ENCODE measurements at regions of chr10 and their contacts with region 1.

Region 1: DNA sequence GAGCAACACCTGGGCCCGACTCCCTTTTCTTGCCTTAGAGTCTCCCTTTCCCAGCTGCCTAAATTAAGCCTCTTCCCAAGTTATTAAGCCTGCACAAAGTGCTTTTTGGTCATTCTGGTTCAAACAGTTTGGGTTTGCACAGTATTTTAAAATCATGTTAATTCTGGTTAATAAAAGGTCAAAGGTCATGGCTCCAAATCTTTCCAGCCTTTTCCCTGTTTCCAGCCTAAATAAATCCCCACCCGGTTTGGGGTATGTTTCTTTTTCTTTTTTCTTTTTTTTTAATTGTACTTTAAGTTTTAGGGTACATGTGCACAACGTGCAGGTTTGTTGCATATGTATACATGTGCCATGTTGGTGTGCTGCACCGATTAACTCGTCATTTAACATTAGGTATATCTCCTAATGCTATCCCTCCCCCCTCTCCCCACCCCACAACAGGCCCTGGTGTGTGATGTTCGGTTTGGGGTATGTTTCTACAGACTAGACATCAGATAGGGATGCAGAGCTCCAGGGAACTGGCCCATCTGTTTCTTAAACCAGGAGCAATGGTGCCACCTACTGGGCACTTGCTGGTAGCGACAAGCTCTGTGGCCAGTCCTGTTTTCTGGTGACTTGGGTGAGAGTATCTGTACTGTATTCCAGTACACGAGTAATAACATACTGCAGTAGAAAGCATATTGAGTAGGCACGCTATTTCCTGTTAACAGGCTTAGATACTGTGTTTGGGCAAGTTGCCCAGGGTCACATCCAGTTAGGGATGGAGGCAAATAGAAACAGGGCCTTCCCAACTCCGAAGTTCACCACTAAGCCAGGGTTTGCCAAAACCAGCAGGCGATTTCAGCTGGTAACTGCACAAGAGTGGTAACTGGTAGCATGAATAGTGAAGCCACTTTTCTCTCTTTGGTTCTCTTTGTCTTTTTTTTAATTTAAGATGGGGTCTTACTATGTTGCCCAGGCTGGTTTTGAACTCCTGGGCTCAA is 60.6 kb upstream of the TRIM8 start:
- DNase-seq: peak; percentile 74
- ATAC-seq: peak; percentile 99
- H3K4me3 ChIP-seq: no peak overlapping the region
- H3K27ac ChIP-seq: no peak overlapping the region
- H3K4me1 ChIP-seq: peaks cover 5% of the 10 kb centered on the region; the same call in 1 of the 2 replicates
- H3K27me3 ChIP-seq: no peaks in the 10 kb centered on the region
- CTCF ChIP-seq: peak; percentile 94

Region 2: DNA sequence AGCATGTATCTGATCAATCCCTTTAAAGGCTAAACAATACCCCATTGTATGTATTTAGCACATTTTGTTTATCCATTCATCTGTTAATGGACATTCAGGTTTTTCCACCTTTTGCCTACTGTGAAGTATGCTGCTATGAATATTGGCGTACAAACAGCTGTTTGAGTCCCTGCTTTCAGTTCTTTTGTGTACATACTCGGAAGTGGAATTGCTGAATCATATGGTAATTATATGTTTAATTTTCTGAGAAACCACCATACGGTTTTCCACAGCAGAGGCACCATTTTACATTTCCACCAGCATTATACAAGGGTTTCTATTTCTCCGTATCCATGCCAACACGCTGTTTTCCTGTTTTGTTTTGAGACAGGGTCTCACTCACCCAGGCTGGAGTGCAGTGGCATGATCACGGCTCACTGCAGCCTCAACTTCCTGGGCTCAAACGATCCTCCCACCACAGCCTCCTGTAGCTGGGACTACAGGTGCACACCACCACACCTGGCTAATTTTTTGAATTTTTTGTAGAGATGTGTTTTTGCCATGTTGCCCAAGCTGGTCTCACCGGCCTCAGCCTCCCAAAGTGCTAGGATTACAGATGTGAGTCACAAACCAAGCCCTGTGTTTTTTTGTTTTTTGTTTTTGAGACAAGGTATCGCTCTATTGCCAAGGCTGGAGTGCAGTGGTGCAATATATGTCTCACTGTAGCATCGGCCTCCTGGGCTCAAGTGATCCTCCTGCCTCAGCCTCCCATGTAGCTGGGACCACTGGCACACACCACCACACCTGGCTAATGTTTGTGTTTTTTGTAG is 866.7 kb before region 1 on chr10:
- CTCF ChIA-PET with region 1: no interaction called
- POLR2A ChIA-PET with region 1: no interaction called
- in situ Hi-C with region 1: no loop called
- intact Hi-C with region 1: no loop called
- DNase-seq: no peak
- ATAC-seq: no peak
- H3K4me3 ChIP-seq: no peak overlapping the region
- H3K27ac ChIP-seq: no peak overlapping the region
- H3K4me1 ChIP-seq: no peaks in the 10 kb centered on the region
- H3K27me3 ChIP-seq: no peaks in the 10 kb centered on the region
- CTCF ChIP-seq: no peak

Region 3: DNA sequence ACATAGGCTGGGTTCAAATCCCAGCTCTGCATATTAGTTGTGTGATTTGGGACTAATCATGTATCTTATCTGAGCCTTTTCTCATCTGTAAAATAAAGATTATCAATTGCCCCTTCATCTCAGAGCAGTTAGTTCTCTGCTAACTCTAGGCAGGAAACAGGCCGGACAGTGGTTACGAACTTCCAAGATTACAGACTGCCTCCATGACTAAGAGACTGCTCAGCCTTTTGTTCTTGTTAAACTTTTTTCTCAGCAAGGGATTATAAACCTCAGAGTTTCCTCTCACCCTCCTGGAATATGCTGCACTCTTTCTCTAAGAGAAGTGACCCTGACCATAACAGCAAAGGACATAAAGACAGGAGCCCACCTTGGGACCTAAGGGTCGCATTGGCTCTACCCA is 240.8 kb before region 1 on chr10:
- CTCF ChIA-PET with region 1: no interaction called
- POLR2A ChIA-PET with region 1: no interaction called
- in situ Hi-C with region 1: no loop called
- intact Hi-C with region 1: no loop called
- DNase-seq: no peak
- ATAC-seq: no peak
- H3K4me3 ChIP-seq: no peak overlapping the region
- H3K27ac ChIP-seq: no peak overlapping the region
- H3K4me1 ChIP-seq: no peaks in the 10 kb centered on the region
- H3K27me3 ChIP-seq: no peaks in the 10 kb centered on the region
- CTCF ChIP-seq: no peak

Region 4: GRCh38 chr10:102394079-102394800 is 189.5 kb before region 1 on chr10:
- CTCF ChIA-PET with region 1: no interaction called
- POLR2A ChIA-PET with region 1: interaction called, 11 read pairs
- in situ Hi-C with region 1: no loop called
- intact Hi-C with region 1: no loop called
- DNase-seq: peak; percentile 79
- ATAC-seq: peak; percentile 92
- H3K4me3 ChIP-seq: peak overlapping the region; percentile 67 to 89
- H3K27ac ChIP-seq: peak overlapping the region; percentile 63
- H3K4me1 ChIP-seq: peaks cover 23% of the 10 kb centered on the region
- H3K27me3 ChIP-seq: no peaks in the 10 kb centered on the region; the same call in 1 of the 2 replicates
- CTCF ChIP-seq: peak; percentile 86

Region 5: DNA sequence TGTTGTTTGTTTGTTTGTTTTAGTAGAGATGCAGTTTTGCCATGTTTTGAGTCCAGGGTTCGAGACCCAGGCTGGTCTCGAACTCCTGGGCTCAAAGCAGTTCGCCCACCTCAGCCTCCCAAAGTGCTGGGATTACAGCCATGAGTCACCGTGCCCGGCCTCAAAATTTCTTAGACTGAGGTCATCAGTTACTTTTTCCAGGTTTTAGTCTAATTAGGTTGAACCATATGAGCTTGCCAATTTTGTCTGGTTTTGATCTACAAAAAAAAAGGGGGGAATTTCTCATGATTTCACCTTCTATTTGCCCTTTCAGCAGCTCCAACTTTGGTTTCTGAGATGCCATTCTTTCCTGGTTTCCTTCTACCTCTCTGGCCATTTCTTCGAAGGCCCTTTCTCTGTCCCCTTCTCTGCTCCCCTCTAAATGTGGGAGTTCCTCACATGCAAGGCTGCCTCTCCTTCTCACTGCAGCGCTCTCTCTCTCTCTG is 156.9 kb before region 1 on chr10:
- CTCF ChIA-PET with region 1: no interaction called
- POLR2A ChIA-PET with region 1: interaction called, 11 read pairs
- in situ Hi-C with region 1: no loop called
- intact Hi-C with region 1: no loop called
- DNase-seq: no peak
- ATAC-seq: no peak
- H3K4me3 ChIP-seq: no peak overlapping the region
- H3K27ac ChIP-seq: no peak overlapping the region
- H3K4me1 ChIP-seq: peaks cover 15% of the 10 kb centered on the region
- H3K27me3 ChIP-seq: no peaks in the 10 kb centered on the region
- CTCF ChIP-seq: no peak

Region 6: DNA sequence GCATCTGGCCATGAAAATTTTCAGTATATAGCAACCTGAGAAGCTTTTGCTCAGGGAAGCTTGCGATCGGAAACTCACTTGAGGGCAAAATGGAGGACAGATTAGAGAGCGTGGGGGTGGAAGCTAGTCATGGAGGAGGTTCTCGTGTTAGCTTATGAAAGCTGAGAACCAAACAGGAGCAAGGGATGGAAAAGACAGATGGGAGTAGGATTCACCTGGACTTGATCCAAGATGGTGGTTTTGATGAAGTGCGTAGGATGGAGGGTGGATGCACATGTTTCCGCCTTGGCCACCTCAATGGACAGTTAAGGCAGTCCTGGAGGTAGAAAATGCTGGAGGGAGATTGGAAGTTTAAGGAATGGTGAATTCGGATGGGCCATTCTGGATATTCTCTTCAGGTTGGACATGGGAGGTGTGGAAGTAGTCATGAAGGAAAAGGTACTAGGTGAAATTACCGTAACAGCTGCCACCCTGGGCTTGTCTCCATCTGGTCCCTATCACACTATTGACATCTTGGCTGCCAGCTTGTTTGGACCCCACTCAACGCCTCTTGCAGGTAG is 126.1 kb before region 1 on chr10:
- CTCF ChIA-PET with region 1: no interaction called
- POLR2A ChIA-PET with region 1: interaction called, 14 read pairs
- in situ Hi-C with region 1: no loop called
- intact Hi-C with region 1: no loop called
- DNase-seq: no peak
- ATAC-seq: no peak
- H3K4me3 ChIP-seq: no peak overlapping the region
- H3K27ac ChIP-seq: no peak overlapping the region
- H3K4me1 ChIP-seq: peaks cover 16% of the 10 kb centered on the region
- H3K27me3 ChIP-seq: no peaks in the 10 kb centered on the region
- CTCF ChIP-seq: no peak

Region 7: DNA sequence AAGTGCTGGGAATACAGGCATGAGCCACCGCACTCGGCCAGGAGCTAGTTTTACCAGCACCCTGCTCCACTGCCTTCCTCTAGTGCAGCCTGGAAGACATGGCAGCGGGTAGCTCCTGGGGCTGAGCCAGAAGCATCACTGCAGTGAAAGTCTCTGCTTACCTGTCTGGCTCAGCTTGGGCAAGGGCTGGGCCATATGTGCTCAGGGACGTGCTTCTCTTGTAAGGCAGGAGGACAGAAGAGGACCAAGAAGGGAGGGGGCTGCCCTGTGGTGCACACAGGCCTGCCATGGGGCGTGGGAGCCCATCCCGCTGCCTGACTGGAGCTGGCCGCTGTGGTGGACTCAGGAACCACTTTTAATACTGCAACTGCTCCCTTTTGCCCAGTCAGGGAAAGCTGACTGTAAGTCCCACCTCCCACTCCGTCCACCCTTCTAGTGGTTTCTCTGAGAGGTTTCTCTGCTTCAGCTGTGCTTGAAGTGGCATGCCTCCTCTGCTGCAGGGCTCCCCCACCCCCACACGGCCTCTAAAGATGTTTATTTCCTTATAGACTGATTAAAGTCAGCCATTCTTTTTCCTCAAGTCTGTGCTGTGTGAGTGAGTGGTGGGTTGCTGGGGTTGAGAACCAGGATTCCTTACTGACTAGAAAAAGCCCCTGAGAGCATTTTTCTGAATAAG is 107.1 kb before region 1 on chr10:
- CTCF ChIA-PET with region 1: interaction called, 11 read pairs
- POLR2A ChIA-PET with region 1: no interaction called
- in situ Hi-C with region 1: no loop called
- intact Hi-C with region 1: no loop called
- DNase-seq: no peak
- ATAC-seq: 0 out of 2 replicates have a peak, but pooled peaks have one; percentile 3
- H3K4me3 ChIP-seq: no peak overlapping the region
- H3K27ac ChIP-seq: no peak overlapping the region
- H3K4me1 ChIP-seq: no peaks in the 10 kb centered on the region
- H3K27me3 ChIP-seq: no peaks in the 10 kb centered on the region
- CTCF ChIP-seq: no peak

Region 8: GRCh38 chr10:102503281-102504220 is 80.2 kb before region 1 on chr10 and contains the start of gene SUFU:
- CTCF ChIA-PET with region 1: interaction called, 38 read pairs
- POLR2A ChIA-PET with region 1: interaction called, 8 read pairs
- in situ Hi-C with region 1: loop called (anchors 10 kb)
- intact Hi-C with region 1: loop called (anchors 2 kb)
- DNase-seq: peak; percentile 91
- ATAC-seq: peak; percentile 83
- H3K4me3 ChIP-seq: peak within 1 kb of the TSS; percentile 95 to 99
- H3K27ac ChIP-seq: peak within 1 kb of the TSS; percentile 90
- H3K4me1 ChIP-seq: peaks cover 20% of the 10 kb centered on the region
- H3K27me3 ChIP-seq: no peaks in the 10 kb centered on the region
- CTCF ChIP-seq: peak; percentile 98
- total RNA-seq, gene SUFU: 9.5 TPM

Region 9: DNA sequence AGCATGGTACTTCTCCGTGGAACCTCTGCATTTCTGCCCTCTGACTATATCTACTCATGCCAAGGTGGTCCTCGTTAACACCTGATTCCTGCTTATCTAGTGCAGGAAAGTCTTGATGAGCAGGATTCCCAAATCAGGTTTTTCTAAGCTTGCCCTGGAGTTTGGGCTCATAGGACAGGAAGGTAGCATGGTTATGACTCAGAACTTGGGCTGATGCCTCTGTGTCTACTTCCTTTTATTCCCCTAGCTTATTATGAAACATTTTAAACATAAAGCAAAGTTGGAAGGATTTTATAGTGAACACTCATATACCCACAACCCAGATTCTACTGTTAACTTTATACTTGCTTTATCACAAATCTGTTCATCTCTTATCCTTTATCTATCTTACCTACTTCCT is 74.3 kb before region 1 on chr10:
- CTCF ChIA-PET with region 1: interaction called, 38 read pairs
- POLR2A ChIA-PET with region 1: no interaction called
- in situ Hi-C with region 1: loop called (anchors 10 kb)
- intact Hi-C with region 1: no loop called
- DNase-seq: no peak
- ATAC-seq: no peak
- H3K4me3 ChIP-seq: no peak overlapping the region
- H3K27ac ChIP-seq: no peak overlapping the region
- H3K4me1 ChIP-seq: peaks cover 8% of the 10 kb centered on the region; the same call in 1 of the 2 replicates
- H3K27me3 ChIP-seq: no peaks in the 10 kb centered on the region
- CTCF ChIP-seq: no peak

Region 10: GRCh38 chr10:102743588-102744373 is 160.1 kb after region 1 on chr10 and contains the start of gene WBP1L:
- CTCF ChIA-PET with region 1: no interaction called
- POLR2A ChIA-PET with region 1: no interaction called
- in situ Hi-C with region 1: no loop called
- intact Hi-C with region 1: no loop called
- DNase-seq: peak; percentile 100
- ATAC-seq: peak; percentile 96
- H3K4me3 ChIP-seq: peak within 1 kb of the TSS; percentile 79 to 92
- H3K27ac ChIP-seq: peak within 1 kb of the TSS; percentile 95
- H3K4me1 ChIP-seq: peaks cover 24% of the 10 kb centered on the region
- H3K27me3 ChIP-seq: no peaks in the 10 kb centered on the region
- CTCF ChIP-seq: no peak
- total RNA-seq, gene WBP1L: 91.3 TPM

Measured in Panc1 (cell line).